IMR-90 (cell line): ENCODE measurements at regions of chr13 and their contacts with region 1.

Region 1: DNA sequence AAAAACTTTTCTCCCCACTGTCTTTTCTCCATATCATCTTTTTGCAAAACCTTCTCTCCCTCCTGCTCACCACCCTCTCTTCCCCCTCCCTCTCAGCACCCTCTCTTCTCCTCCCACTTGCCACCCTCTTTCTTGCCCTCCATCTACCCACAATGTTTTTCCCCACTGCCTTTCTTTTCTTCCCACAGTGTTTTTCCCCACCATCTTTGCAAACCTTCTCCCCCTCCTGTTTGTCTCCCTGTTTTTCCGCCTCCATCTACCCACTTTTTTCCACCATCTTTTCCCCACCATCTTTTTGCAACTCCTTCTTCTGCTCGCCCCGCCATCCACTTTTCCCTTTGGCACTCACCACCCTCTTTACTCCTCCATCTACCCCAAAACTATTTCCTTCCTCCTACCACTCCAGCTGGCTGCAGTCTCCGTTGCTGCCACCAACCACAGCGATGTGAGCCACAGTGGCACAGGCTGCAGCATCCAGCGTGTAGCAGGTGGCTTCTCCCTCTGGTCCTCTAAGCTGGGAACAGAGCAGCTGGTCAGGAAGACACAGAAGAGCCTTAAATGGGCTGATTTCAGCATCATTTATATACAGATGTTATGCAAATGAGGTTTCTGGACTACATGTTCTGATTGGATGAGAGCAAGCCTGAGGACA is 144.3 kb downstream of the TNFRSF19 start:
- DNase-seq: no peak
- ATAC-seq: no peak
- H3K4me3 ChIP-seq: no peak overlapping the region
- H3K27ac ChIP-seq: no peak overlapping the region
- H3K4me1 ChIP-seq: peaks cover 4% of the 10 kb centered on the region
- H3K27me3 ChIP-seq: no peaks in the 10 kb centered on the region
- CTCF ChIP-seq: no peak
- POLR2A ChIP-seq: no peak
- RAD21 ChIP-seq: no peak

Region 2: DNA sequence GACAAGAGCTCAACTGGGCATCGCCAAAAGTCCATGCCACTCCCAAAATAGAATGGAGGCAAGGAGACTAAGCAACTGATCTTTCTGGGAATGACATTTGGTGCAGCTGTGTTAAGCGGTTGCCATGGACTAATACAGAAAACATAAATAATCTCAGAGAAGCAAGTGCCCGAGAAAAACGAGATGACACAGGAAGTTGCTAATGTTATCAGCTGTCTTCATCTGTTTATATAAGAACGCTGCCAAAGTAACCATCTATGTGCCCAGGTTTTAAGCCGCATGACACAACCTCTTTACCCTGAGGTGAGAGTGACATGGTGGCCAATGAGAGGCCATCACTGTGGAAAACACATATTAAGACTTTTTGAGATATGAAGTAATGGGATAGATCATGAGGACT is 226.1 kb before region 1 on chr13:
- CTCF ChIA-PET with region 1: no interaction called
- POLR2A ChIA-PET with region 1: no interaction called
- dilution Hi-C with region 1: no loop called
- in situ Hi-C with region 1: no loop called
- intact Hi-C with region 1: no loop called
- DNase-seq: peak; percentile 79
- ATAC-seq: no peak; the same call in 1 of the 2 replicates
- H3K4me3 ChIP-seq: no peak overlapping the region
- H3K27ac ChIP-seq: no peak overlapping the region
- H3K4me1 ChIP-seq: peaks cover 6% of the 10 kb centered on the region
- H3K27me3 ChIP-seq: no peaks in the 10 kb centered on the region
- CTCF ChIP-seq: no peak
- POLR2A ChIP-seq: no peak
- RAD21 ChIP-seq: no peak

Region 3: GRCh38 chr13:23851106-23851505 is 136.6 kb after region 1 on chr13:
- CTCF ChIA-PET with region 1: no interaction called
- POLR2A ChIA-PET with region 1: interaction called, 10 read pairs
- dilution Hi-C with region 1: no loop called
- in situ Hi-C with region 1: no loop called
- intact Hi-C with region 1: no loop called
- DNase-seq: peak; percentile 24
- ATAC-seq: no peak
- H3K4me3 ChIP-seq: no peak overlapping the region
- H3K27ac ChIP-seq: no peak overlapping the region
- H3K4me1 ChIP-seq: no peaks in the 10 kb centered on the region
- H3K27me3 ChIP-seq: no peaks in the 10 kb centered on the region
- CTCF ChIP-seq: no peak
- POLR2A ChIP-seq: no peak
- RAD21 ChIP-seq: no peak